Body of pancreas (tissue), 4 donors: ENCODE measurements at regions of chr1 and their contacts with region 1.

Region 1: DNA sequence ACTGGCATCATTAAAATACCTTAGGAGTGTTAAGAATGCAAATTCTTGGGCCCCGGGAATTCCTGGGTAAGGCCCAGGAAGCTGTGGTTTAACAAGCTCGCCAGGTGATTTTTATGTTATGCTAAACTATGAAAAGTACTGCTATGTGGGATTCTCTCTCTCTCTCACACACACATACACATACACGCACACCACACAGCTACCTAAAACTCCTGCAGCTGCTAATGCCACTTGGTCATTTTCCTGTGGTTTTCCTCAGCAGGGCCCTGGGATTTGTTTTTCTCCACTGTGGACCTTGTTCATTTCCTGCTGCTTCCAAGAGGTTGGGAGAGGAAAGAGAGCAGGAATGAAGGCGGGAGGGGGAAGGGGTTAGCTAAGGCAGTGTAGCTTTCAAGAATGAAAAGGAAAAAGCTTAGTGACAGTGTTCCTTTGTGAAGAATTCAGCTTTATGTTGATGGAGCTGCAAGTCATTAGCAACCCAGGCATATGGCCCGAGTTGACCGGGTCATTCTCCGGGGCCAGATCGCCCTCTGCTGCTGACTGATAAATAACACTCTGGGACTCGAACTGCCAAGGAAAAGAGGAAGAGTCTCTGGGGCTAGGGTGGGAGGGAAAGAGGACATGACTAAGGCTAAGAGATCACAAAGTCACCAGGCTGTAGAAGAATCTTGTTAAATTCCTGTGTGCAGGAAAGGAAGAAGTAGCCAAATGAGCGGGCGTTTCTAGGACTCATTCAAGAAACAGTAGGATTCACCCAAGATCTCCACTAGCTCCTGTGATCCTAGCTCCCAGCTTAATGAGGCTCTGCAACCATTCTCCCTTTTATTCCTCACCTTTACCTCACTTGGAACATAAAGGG is 30.5 kb upstream of the LRIG2 start:
- DNase-seq: peak; percentile 60 to 76 (median 72)
- ATAC-seq: peak; percentile 52
- H3K4me3 ChIP-seq: no peak overlapping the region
- H3K27ac ChIP-seq: no peak overlapping the region
- H3K4me1 ChIP-seq: no peaks in the 10 kb centered on the region
- H3K27me3 ChIP-seq: no peaks in the 10 kb centered on the region
- CTCF ChIP-seq: peak; percentile 37 to 71 (median 58)
- POLR2A ChIP-seq: no peak

Region 2: DNA sequence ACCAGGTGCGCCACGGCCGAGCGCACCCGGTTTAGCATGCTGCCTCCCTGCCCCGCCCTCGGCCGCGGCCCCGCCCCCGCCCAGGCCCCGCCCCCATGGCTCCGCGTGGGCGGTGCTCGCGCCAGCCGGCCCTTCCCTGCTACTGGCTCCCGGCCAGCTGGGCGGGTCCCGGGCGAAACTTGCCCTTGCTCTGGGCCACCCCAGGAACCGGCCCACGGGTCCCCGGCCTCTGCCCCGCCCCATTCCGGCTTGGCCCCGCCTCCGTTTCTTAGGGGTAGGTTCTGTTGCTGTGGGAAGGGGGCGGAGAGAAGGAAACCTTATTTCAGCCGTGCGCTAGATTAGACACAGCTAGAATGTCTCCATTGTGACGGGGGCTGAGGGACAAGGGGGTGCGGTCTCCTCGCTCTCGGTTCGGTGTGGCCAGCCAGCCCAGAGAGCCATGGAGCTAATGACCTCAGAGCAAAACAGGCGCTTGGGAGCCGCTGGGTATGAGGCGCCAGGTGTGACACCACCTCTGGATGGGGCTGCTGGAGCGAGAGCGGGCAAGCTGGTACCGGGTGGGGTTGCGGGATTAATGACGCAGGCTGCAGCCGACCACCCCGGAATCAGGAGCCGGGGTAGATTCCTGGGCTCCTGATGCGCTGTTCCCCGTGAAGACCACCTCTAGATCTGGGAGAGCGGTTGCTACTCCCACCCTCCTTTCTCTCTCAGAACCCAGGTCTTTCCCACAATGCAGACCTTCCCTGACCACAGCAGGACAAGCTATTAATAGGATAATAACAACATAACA is 327.1 kb before region 1 on chr1 and contains the start of gene PPM1J:
- intact Hi-C with region 1: loop called (anchors 10 kb)
- DNase-seq: peak; percentile 99 to 100 (median 99)
- ATAC-seq: peak; percentile 86
- H3K4me3 ChIP-seq: peak within 1 kb of the TSS; percentile 25 to 63
- H3K27ac ChIP-seq: peak within 1 kb of the TSS; percentile 63 to 73 (median 72)
- H3K4me1 ChIP-seq: peaks cover 32% of the 10 kb centered on the region
- H3K27me3 ChIP-seq: no peaks in the 10 kb centered on the region
- CTCF ChIP-seq: no peak
- POLR2A ChIP-seq: peak in 2 of 3 donors; percentile 46 to 49
- total RNA-seq, gene PPM1J: 0.66 to 2.3 TPM

Region 3: GRCh38 chr1:112882271-112882744 is 160.2 kb before region 1 on chr1:
- intact Hi-C with region 1: loop called (anchors 5 kb)
- DNase-seq: no peak
- ATAC-seq: no peak
- H3K4me3 ChIP-seq: no peak overlapping the region
- H3K27ac ChIP-seq: no peak overlapping the region
- H3K4me1 ChIP-seq: no peaks in the 10 kb centered on the region
- H3K27me3 ChIP-seq: no peaks in the 10 kb centered on the region
- CTCF ChIP-seq: no peak
- POLR2A ChIP-seq: no peak

Region 4: DNA sequence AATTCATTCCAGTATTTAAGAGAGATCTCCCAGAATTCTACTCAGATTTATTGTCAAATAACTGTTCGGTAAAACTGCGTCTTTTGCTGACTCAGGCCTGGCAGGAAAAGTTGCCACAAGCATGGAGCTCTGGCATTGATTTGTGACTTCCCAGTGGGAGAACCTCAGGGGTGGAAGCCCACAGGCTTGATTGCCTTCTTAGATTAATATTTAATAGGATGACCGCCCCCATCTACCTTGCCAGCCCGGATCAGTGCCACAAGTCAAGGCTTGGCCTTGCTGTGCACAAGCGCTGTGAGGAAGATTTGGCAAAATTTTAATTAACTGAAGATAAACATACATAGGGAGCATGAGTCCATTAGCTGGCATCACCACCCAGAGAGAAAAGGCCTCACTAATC is 124.0 kb after region 1 on chr1:
- intact Hi-C with region 1: no loop called
- DNase-seq: peak; percentile 14 to 49 (median 32)
- ATAC-seq: peak; percentile 72
- H3K4me3 ChIP-seq: no peak overlapping the region
- H3K27ac ChIP-seq: peak overlapping the region in 2 of 4 donors; percentile 4 to 27
- H3K4me1 ChIP-seq: no peaks in the 10 kb centered on the region
- H3K27me3 ChIP-seq: no peaks in the 10 kb centered on the region
- CTCF ChIP-seq: no peak
- POLR2A ChIP-seq: no peak